ENCODE measurements at regions of chr6 and their contacts with region 1.

Region 1: DNA sequence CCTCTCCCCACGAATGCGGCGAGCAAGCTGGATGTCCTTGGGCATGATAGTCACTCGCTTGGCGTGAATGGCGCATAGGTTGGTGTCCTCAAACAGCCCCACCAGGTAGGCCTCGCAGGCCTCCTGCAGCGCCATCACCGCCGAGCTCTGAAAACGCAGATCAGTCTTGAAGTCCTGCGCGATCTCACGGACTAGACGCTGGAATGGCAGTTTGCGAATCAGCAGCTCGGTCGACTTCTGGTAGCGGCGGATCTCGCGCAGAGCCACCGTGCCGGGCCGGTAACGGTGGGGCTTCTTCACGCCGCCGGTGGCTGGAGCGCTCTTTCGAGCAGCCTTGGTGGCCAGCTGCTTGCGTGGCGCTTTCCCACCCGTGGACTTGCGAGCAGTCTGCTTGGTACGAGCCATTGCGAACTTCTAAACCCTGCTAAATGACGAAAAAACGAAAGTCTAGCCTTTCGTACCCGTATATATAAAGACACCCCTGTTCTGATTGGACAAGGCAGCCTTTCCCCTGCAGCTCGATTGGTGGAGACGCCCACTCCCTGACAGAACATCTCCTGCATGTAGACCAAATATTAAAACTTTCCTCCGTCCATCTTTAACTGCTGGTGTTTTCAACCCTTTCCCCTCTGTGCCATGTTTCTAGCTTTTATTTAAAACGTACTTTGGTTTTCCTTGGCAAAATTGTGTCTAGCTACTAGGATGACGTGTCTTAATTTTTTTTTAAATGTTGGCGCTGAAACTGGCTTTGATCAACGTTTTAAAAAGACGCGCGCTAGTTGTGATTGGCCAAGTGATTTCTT is 109.8 kb downstream of the HFE start:
- DNase-seq: peak; percentile 91
- H3K4me3 Mint-ChIP-seq: peak overlapping the region; percentile 99
- H3K27ac Mint-ChIP-seq: peak overlapping the region; percentile 98
- H3K4me1 Mint-ChIP-seq: peaks cover 44% of the 10 kb centered on the region
- H3K27me3 Mint-ChIP-seq: no peaks in the 10 kb centered on the region

Region 2: GRCh38 chr6:26031595-26032339 is 165.3 kb before region 1 on chr6:
- CTCF ChIA-PET with region 1: interaction called, 8 read pairs
- POLR2A ChIA-PET with region 1: interaction called, 68 read pairs
- DNase-seq: peak; percentile 96
- H3K4me3 Mint-ChIP-seq: peak overlapping the region; percentile 96
- H3K27ac Mint-ChIP-seq: peak overlapping the region; percentile 100
- H3K4me1 Mint-ChIP-seq: peaks cover 79% of the 10 kb centered on the region
- H3K27me3 Mint-ChIP-seq: peaks cover 3% of the 10 kb centered on the region

Region 3: GRCh38 chr6:26175428-26176181 is 21.4 kb before region 1 on chr6:
- CTCF ChIA-PET with region 1: interaction called, 6 read pairs
- POLR2A ChIA-PET with region 1: interaction called, 44 read pairs
- DNase-seq: peak; percentile 81
- H3K4me3 Mint-ChIP-seq: peak overlapping the region; percentile 54
- H3K27ac Mint-ChIP-seq: peak overlapping the region; percentile 75
- H3K4me1 Mint-ChIP-seq: peaks cover 50% of the 10 kb centered on the region
- H3K27me3 Mint-ChIP-seq: no peaks in the 10 kb centered on the region

Region 4: DNA sequence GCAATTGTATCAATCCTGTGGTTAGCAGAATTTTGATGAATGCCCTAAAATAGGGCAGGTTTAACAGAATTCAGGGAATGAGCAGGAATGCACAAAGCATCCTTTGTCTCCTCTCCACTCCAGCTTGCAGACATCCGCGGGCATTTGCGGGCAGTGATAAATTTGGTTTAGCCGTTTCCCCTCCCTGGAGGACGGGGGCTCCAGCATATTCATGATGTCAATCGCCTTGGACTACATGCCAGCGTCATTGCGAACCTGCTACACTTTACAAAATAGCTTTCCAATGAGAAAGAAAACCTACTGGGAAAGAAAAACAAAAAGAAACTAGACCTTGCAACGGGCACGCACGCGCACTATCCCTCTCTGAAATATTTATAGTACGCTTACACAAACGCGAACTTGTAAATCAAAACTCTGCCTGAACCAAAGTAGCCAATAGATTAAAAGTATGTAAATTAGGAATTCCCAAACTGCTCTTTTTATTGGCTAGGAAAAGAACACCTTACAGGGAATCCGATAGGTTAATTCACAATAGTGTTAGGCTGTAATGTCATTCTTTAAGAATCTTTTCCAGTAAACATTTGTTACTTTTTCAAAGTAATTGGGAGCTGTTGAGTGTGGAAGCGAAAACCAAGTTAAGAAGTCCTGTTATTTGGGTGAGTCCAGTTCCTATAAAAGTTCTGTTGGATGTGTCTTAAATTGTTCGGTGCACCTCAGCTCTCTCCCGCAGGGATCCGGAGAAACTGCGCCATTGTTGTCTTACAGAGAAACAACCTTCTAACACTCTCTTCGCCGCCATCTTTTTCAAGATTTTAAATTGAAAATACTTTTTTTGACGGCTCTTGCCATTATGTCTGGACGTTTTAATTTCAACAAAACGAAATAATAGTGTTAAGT is 26.9 kb after region 1 on chr6:
- CTCF ChIA-PET with region 1: no interaction called
- POLR2A ChIA-PET with region 1: interaction called, 15 read pairs
- DNase-seq: peak; percentile 82
- H3K4me3 Mint-ChIP-seq: no peak overlapping the region
- H3K27ac Mint-ChIP-seq: no peak overlapping the region
- H3K4me1 Mint-ChIP-seq: peaks cover 43% of the 10 kb centered on the region
- H3K27me3 Mint-ChIP-seq: no peaks in the 10 kb centered on the region

Region 5: DNA sequence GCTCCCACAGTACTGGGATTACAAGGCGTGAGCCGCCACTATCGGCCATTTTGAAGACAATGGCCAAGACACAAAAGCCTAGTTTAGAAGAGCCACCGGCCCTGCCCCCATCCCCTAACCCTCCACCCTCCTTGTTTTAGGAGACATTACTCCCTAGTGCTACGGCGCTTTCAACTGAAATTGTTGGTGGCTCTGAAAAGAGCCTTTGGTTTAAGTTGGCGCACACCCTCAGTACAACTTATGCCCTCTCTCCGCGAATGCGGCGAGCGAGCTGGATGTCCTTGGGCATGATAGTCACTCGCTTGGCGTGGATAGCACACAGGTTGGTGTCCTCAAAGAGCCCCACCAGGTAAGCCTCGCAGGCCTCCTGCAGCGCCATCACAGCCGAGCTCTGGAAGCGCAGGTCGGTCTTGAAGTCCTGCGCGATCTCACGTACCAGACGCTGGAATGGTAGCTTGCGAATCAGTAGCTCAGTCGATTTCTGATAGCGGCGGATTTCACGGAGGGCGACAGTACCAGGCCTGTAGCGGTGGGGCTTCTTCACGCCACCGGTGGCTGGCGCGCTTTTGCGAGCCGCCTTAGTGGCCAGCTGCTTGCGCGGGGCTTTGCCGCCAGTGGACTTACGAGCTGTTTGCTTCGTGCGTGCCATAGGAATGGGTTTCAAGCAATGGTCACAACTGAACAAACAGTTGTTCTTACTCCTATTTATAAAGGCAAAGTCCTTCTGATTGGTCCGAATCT is 53.1 kb after region 1 on chr6:
- CTCF ChIA-PET with region 1: interaction called, 13 read pairs
- POLR2A ChIA-PET with region 1: interaction called, 68 read pairs
- DNase-seq: peak; percentile 82
- H3K4me3 Mint-ChIP-seq: peak overlapping the region; percentile 98
- H3K27ac Mint-ChIP-seq: peak overlapping the region; percentile 100
- H3K4me1 Mint-ChIP-seq: peaks cover 40% of the 10 kb centered on the region
- H3K27me3 Mint-ChIP-seq: no peaks in the 10 kb centered on the region

Region 6: GRCh38 chr6:26260110-26260637 is 63.1 kb after region 1 on chr6:
- CTCF ChIA-PET with region 1: no interaction called
- POLR2A ChIA-PET with region 1: no interaction called
- DNase-seq: no peak
- H3K4me3 Mint-ChIP-seq: no peak overlapping the region
- H3K27ac Mint-ChIP-seq: no peak overlapping the region
- H3K4me1 Mint-ChIP-seq: peaks cover 12% of the 10 kb centered on the region
- H3K27me3 Mint-ChIP-seq: no peaks in the 10 kb centered on the region

Region 7: DNA sequence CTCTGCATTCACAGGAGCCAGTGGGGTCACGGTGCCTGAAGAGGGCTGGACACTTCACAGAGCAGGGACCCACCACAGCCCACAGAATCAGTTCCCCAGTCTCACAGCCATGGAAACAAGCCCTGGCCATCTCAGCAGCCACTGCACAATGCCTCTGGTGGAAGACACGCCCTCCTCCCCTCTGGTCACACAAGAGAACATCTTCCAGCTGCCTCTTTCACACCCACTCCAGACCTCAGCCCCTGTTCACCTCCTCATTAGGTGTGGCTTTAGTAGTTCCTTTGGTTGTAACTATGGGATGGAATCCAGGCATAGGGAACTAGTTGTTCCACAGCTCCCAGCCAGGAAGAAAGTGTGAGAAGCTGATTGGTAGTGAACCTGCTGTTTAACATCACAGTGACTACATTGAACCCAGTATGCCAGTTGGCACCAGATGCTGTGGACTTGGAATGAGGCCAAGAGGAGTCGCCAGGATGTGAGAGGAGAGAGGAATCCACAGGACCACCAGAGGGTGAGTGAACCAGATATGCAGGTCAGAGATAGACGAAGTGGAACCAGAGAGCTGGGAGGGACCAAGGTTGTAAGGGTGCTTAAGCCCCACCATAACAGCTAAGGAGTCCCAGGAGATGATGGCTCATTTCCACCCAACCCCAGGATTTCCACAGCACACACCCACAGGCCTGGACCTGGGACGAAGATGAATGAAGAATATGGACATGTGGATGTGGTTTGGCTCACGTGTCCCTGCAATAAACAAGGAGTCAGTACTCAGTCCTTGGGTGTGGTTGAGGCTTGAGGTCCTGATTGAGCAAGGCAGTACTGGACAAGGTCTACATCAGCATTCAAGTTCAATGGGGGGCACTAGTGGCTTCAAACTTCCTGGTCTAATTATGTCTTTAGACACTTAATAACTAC is 234.5 kb after region 1 on chr6:
- CTCF ChIA-PET with region 1: no interaction called
- POLR2A ChIA-PET with region 1: no interaction called
- DNase-seq: no peak
- H3K4me3 Mint-ChIP-seq: no peak overlapping the region
- H3K27ac Mint-ChIP-seq: no peak overlapping the region
- H3K4me1 Mint-ChIP-seq: peaks cover 6% of the 10 kb centered on the region
- H3K27me3 Mint-ChIP-seq: no peaks in the 10 kb centered on the region